Calu3 (cell line): ENCODE measurements at regions of chr1 and their contacts with region 1.

Region 1: GRCh38 chr1:226506921-226507320 is 41.6 kb upstream of the STUM start:
- DNase-seq: no peak
- H3K4me3 Mint-ChIP-seq: no peak overlapping the region
- H3K27ac Mint-ChIP-seq: no peak overlapping the region
- H3K4me1 Mint-ChIP-seq: no peaks in the 10 kb centered on the region
- H3K27me3 Mint-ChIP-seq: peaks cover 77% of the 10 kb centered on the region
- CTCF ChIP-seq: no peak

Region 2: DNA sequence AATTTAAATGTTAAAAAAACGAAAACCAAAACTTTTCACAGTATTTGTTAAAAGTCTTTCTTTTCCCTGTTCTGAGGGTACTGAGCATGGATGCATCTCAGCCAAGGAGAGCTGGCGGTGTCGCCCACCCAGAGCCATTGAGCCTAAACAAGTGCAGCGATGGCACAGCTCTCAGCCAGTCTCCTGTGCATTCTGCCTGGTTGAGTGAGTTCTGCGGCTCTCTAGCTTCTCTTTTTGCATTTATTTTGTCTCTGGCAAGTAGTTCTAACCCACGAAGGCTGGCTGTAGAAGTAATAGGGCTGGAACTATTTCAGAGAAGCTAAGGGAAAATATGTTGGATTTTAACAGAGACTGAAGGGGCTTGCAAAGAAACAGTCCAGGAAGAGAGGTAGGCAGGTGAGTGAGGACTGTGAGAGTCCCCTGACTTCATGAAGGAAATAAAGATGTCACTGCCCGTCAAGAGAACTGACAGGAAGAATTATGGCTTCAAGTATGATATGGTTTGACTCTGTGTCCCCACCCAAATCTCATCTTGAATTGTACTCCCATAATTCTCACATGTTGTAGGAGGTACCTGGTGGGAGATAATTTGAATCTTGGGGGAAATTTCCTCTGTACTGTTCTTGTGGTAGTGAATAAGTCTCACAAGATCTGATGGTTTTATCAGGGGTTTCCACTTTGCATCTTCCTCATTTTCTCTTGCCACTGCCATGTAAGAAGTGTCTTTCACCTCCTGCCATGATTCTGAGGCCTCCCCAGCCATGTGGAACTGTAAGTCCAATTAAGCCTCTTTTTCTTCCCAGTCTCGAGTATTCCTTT is 162.3 kb before region 1 on chr1:
- CTCF ChIA-PET with region 1: no interaction called
- intact Hi-C with region 1: no loop called
- DNase-seq: no peak
- H3K4me3 Mint-ChIP-seq: no peak overlapping the region
- H3K27ac Mint-ChIP-seq: no peak overlapping the region
- H3K4me1 Mint-ChIP-seq: peaks cover 1% of the 10 kb centered on the region
- H3K27me3 Mint-ChIP-seq: no peaks in the 10 kb centered on the region
- CTCF ChIP-seq: no peak

Region 3: GRCh38 chr1:226466296-226466695 is 40.6 kb before region 1 on chr1:
- CTCF ChIA-PET with region 1: no interaction called
- intact Hi-C with region 1: no loop called
- DNase-seq: no peak
- H3K4me3 Mint-ChIP-seq: no peak overlapping the region
- H3K27ac Mint-ChIP-seq: no peak overlapping the region
- H3K4me1 Mint-ChIP-seq: no peaks in the 10 kb centered on the region
- H3K27me3 Mint-ChIP-seq: peaks cover 75% of the 10 kb centered on the region
- CTCF ChIP-seq: no peak

Region 4: DNA sequence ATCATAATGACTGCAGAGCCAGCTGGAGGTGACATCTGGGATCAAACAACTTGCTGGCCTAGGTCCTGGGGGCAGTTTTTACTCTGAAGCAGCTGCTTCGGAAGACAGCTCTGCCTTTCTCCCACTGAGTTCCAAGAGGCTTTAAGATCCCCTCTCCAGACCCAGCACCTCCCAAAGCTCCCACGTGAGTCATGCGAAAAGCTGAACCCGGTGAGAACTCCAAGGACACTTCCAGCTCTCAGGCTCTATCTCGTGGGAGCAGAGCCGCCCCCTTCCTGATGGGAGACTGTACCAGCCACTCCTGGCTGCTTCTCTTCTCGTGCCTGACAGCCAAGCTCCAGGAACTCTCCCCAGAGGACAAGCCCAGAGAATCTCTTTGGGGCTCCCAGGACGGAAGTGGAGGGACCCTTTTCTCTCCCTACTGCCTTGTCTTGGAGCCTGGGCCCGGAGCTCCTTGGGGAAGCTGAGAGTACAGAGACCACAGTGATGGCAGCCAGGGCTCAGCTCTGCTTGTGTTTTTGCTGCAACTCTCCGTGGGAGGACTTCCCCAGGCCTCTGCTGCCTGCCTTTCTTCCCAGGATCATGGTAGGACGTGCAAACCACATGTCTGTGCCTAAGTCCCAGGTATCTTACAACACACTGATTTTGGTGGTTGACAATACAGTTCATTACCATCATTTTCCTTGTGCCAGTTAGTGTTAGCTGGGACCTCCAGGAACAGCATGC is 82.2 kb after region 1 on chr1:
- CTCF ChIA-PET with region 1: no interaction called
- intact Hi-C with region 1: no loop called
- DNase-seq: no peak
- H3K4me3 Mint-ChIP-seq: no peak overlapping the region
- H3K27ac Mint-ChIP-seq: no peak overlapping the region
- H3K4me1 Mint-ChIP-seq: no peaks in the 10 kb centered on the region
- H3K27me3 Mint-ChIP-seq: peaks cover 34% of the 10 kb centered on the region
- CTCF ChIP-seq: no peak

Region 5: GRCh38 chr1:226951286-226952117 is 444.6 kb after region 1 on chr1:
- CTCF ChIA-PET with region 1: interaction called, 13 read pairs
- intact Hi-C with region 1: no loop called
- DNase-seq: no peak
- H3K4me3 Mint-ChIP-seq: no peak overlapping the region
- H3K27ac Mint-ChIP-seq: no peak overlapping the region
- H3K4me1 Mint-ChIP-seq: peaks cover 8% of the 10 kb centered on the region
- H3K27me3 Mint-ChIP-seq: no peaks in the 10 kb centered on the region
- CTCF ChIP-seq: no peak